CD8-positive, alpha-beta T cell (primary cell): ENCODE measurements at regions of chr12 and their contacts with region 1.

Region 1: GRCh38 chr12:115541891-115542421 is 735.5 kb downstream of the MED13L start:
- DNase-seq: no peak
- ATAC-seq: no peak
- H3K4me3 ChIP-seq: no peak overlapping the region
- H3K4me3 Mint-ChIP-seq: no peak overlapping the region
- H3K27ac ChIP-seq: no peak overlapping the region
- H3K27ac Mint-ChIP-seq: no peak overlapping the region
- H3K4me1 ChIP-seq: no peaks in the 10 kb centered on the region
- H3K4me1 Mint-ChIP-seq: no peaks in the 10 kb centered on the region
- H3K27me3 ChIP-seq: no peaks in the 10 kb centered on the region
- H3K27me3 Mint-ChIP-seq: peaks cover 2% of the 10 kb centered on the region
- CTCF ChIP-seq: no peak

Region 2: DNA sequence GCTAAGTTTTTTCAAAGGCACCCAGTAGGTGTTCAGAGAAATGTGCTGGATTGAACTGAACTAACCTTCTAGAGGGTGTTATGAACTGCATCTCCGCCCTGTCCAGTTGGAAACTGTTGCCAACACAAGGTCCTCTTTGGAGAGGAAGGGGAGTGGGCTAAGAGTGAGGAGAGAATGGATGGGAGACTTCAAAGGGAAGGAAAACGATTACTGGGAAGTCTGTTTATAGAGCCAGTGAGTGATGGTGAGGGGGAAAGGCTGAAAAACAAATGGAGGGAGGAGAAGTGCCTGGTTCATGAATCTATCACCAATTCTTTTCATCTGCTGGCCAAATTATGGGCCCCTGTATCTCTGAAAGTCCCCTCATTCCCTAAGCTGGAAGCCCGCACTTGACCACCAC is 1050.0 kb before region 1 on chr12:
- CTCF ChIA-PET with region 1: no interaction called
- POLR2A ChIA-PET with region 1: no interaction called
- intact Hi-C with region 1: no loop called
- DNase-seq: no peak
- ATAC-seq: no peak
- H3K4me3 ChIP-seq: no peak overlapping the region
- H3K4me3 Mint-ChIP-seq: no peak overlapping the region
- H3K27ac ChIP-seq: no peak overlapping the region
- H3K27ac Mint-ChIP-seq: no peak overlapping the region
- H3K4me1 ChIP-seq: no peaks in the 10 kb centered on the region
- H3K4me1 Mint-ChIP-seq: no peaks in the 10 kb centered on the region
- H3K27me3 ChIP-seq: no peaks in the 10 kb centered on the region
- H3K27me3 Mint-ChIP-seq: peaks cover 10% of the 10 kb centered on the region
- CTCF ChIP-seq: no peak

Region 3: GRCh38 chr12:115528466-115528865 is 13.5 kb before region 1 on chr12:
- CTCF ChIA-PET with region 1: no interaction called
- POLR2A ChIA-PET with region 1: no interaction called
- intact Hi-C with region 1: no loop called
- DNase-seq: no peak
- ATAC-seq: no peak
- H3K4me3 ChIP-seq: no peak overlapping the region
- H3K4me3 Mint-ChIP-seq: no peak overlapping the region
- H3K27ac ChIP-seq: no peak overlapping the region
- H3K27ac Mint-ChIP-seq: no peak overlapping the region
- H3K4me1 ChIP-seq: no peaks in the 10 kb centered on the region
- H3K4me1 Mint-ChIP-seq: no peaks in the 10 kb centered on the region
- H3K27me3 ChIP-seq: no peaks in the 10 kb centered on the region
- H3K27me3 Mint-ChIP-seq: no peaks in the 10 kb centered on the region
- CTCF ChIP-seq: no peak

Region 4: GRCh38 chr12:115598871-115599811 is 57.2 kb after region 1 on chr12:
- CTCF ChIA-PET with region 1: no interaction called
- POLR2A ChIA-PET with region 1: no interaction called
- intact Hi-C with region 1: loop called in 1 of 2 experiments (anchors 2 kb)
- DNase-seq: no peak
- ATAC-seq: no peak
- H3K4me3 ChIP-seq: no peak overlapping the region
- H3K4me3 Mint-ChIP-seq: no peak overlapping the region
- H3K27ac ChIP-seq: no peak overlapping the region
- H3K27ac Mint-ChIP-seq: no peak overlapping the region
- H3K4me1 ChIP-seq: no peaks in the 10 kb centered on the region
- H3K4me1 Mint-ChIP-seq: no peaks in the 10 kb centered on the region
- H3K27me3 ChIP-seq: no peaks in the 10 kb centered on the region
- H3K27me3 Mint-ChIP-seq: peaks cover 26% of the 10 kb centered on the region
- CTCF ChIP-seq: no peak